Left ventricle myocardium superior (tissue), 1 donor: ENCODE measurements at regions of chr16 and their contacts with region 1.

Region 1: GRCh38 chr16:19071811-19072777 is 4.7 kb downstream of the COQ7 start:
- DNase-seq: peak; percentile 44
- ATAC-seq: no peak

Region 2: GRCh38 chr16:18789850-18790724 is 282.0 kb before region 1 on chr16 and contains the start of gene RPS15A:
- intact Hi-C with region 1: loop called (anchors 10 kb)
- DNase-seq: peak; percentile 93
- ATAC-seq: peak; percentile 99
- total RNA-seq, gene RPS15A: 683 TPM